OCI-LY7 (cell line): ENCODE measurements at regions of chr13 and their contacts with region 1.

Region 1: GRCh38 chr13:45156565-45157361 is 36.5 kb downstream of the GTF2F2 start:
- DNase-seq: no peak
- H3K4me3 ChIP-seq: no peak overlapping the region
- H3K27ac ChIP-seq: no peak overlapping the region
- H3K4me1 ChIP-seq: no peaks in the 10 kb centered on the region
- CTCF ChIP-seq: no peak

Region 2: GRCh38 chr13:45167611-45168556 is 11.1 kb after region 1 on chr13:
- CTCF ChIA-PET with region 1: no interaction called
- POLR2A ChIA-PET with region 1: interaction called, 11 read pairs
- intact Hi-C with region 1: no loop called
- DNase-seq: no peak
- H3K4me3 ChIP-seq: no peak overlapping the region
- H3K27ac ChIP-seq: no peak overlapping the region
- H3K4me1 ChIP-seq: no peaks in the 10 kb centered on the region
- CTCF ChIP-seq: no peak

Region 3: GRCh38 chr13:45310341-45311125 is 153.8 kb after region 1 on chr13:
- CTCF ChIA-PET with region 1: no interaction called
- POLR2A ChIA-PET with region 1: no interaction called
- intact Hi-C with region 1: no loop called
- DNase-seq: no peak
- H3K4me3 ChIP-seq: peak overlapping the region; percentile 51
- H3K27ac ChIP-seq: no peak overlapping the region
- H3K4me1 ChIP-seq: peaks cover 10% of the 10 kb centered on the region
- CTCF ChIP-seq: no peak